GM23248 (cell line): ENCODE measurements at regions of chr6 and their contacts with region 1.

Region 1: DNA sequence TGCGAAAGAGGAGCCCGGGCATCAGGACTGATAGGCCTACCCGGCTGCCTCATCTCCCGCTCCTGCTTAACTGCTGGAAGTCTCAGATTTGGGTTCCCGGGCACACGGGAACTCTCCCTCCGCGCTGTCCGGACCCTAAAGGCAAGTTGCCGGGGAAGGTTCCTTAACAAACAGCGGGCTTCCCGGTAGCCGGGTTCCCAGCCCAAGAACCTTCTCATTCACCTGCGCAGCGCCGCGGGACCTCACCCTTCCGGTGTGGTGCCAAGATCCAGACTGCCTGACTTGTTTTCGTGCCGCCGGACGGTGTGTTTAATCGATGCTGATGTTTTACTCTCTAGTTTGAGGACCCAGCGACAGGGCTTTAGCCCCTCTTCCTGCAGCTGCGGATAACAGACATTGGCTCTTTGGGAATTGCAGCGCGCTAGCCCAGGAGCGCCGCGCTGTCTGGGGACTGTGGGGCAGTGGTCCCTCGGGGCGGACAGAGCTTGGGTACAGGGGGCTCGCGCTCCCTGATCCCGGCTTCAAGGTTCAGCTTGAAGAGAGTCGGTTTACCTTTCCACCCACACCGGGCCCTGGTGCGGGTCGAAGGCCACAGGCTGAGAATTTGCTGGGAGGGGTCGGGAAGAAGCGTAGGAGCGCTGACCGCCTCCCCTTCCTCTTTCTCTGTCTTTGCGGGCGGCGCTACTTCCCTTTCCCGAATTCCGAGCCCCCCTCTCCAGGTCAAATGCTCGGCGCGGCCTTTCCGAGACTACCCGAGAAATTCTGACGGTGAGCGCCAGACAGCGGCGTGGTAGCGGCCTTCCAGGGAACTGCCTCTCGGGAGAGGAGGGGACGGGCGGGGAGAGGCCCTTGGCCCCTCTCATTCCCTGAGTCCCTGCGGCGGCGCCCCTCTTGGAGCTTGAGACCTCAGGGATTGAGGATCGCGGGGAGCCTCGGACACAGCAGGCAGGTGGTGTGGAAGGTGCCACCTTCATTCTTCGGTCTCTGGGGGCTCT is 17.2 kb downstream of the ABT1 start:
- DNase-seq: peak; percentile 37
- H3K4me3 ChIP-seq: peak overlapping the region; percentile 37
- H3K27ac ChIP-seq: no peak overlapping the region
- H3K4me1 ChIP-seq: no peaks in the 10 kb centered on the region; the same call in 1 of the 2 replicates
- H3K27me3 ChIP-seq: peaks cover 32% of the 10 kb centered on the region

Region 2: DNA sequence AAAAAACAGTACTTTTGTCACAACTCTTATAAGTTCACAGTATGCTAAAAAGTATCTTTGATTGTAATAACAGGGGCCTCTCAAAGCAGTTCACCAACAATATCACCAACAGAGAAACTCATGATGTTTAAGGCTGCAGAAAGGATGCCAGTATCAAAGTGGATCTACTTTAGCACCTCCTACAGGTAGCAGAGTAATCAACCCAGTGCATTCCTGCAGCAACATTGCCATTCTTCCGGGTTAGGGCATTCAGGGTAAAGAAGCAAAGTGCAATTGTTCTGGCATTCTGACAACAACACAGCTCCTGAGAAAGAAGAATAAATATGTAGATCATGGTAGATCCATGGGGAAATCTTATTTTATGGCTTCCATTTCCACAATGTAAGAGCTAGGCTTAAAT is 867.0 kb before region 1 on chr6:
- in situ Hi-C with region 1: no loop called
- DNase-seq: no peak
- H3K4me3 ChIP-seq: no peak overlapping the region
- H3K27ac ChIP-seq: no peak overlapping the region
- H3K4me1 ChIP-seq: no peaks in the 10 kb centered on the region
- H3K27me3 ChIP-seq: no peaks in the 10 kb centered on the region

Region 3: GRCh38 chr6:26485112-26485780 is 128.7 kb before region 1 on chr6:
- in situ Hi-C with region 1: no loop called
- DNase-seq: no peak
- H3K4me3 ChIP-seq: no peak overlapping the region
- H3K27ac ChIP-seq: no peak overlapping the region
- H3K4me1 ChIP-seq: no peaks in the 10 kb centered on the region
- H3K27me3 ChIP-seq: no peaks in the 10 kb centered on the region

Region 4: GRCh38 chr6:26743941-26744699 is 130.1 kb after region 1 on chr6:
- in situ Hi-C with region 1: no loop called
- DNase-seq: peak; percentile 14
- H3K4me3 ChIP-seq: peak overlapping the region; percentile 42
- H3K27ac ChIP-seq: no peak overlapping the region
- H3K4me1 ChIP-seq: no peaks in the 10 kb centered on the region
- H3K27me3 ChIP-seq: peaks cover 24% of the 10 kb centered on the region

Region 5: GRCh38 chr6:27081931-27082330 is 467.9 kb after region 1 on chr6:
- in situ Hi-C with region 1: loop called (anchors 10 kb)
- DNase-seq: no peak
- H3K4me3 ChIP-seq: no peak overlapping the region
- H3K27ac ChIP-seq: no peak overlapping the region
- H3K4me1 ChIP-seq: no peaks in the 10 kb centered on the region
- H3K27me3 ChIP-seq: peaks cover 25% of the 10 kb centered on the region; the same call in 1 of the 2 replicates